ENCODE measurements at regions of chr2 and their contacts with region 1.

Region 1: GRCh38 chr2:24613154-24613814 is 122.2 kb downstream of the NCOA1 start:
- DNase-seq: peak; percentile 18 to 46
- ATAC-seq: peak; percentile 74 to 86
- H3K4me3 ChIP-seq: no peak overlapping the region
- H3K27ac ChIP-seq: peak overlapping the region; percentile 51 to 72 (median 62)
- H3K4me1 ChIP-seq: peaks cover 55 to 59% of the 10 kb centered on the region in 2 donors
- H3K27me3 ChIP-seq: no peaks in the 10 kb centered on the region
- CTCF ChIP-seq: peak in 3 of 5 experiments; percentile 3 to 34 (median 18)
- POLR2A ChIP-seq: no peak

Region 2: GRCh38 chr2:24191848-24192247 is 421.4 kb before region 1 on chr2:
- in situ Hi-C with region 1: no loop called
- intact Hi-C with region 1: no loop called
- DNase-seq: no peak
- ATAC-seq: no peak
- H3K4me3 ChIP-seq: no peak overlapping the region
- H3K27ac ChIP-seq: no peak overlapping the region
- H3K4me1 ChIP-seq: no peaks in the 10 kb centered on the region
- H3K27me3 ChIP-seq: no peaks in the 10 kb centered on the region
- CTCF ChIP-seq: no peak
- POLR2A ChIP-seq: no peak

Region 3: GRCh38 chr2:24635181-24635580 is 21.9 kb after region 1 on chr2:
- in situ Hi-C with region 1: no loop called
- intact Hi-C with region 1: no loop called
- DNase-seq: no peak
- ATAC-seq: no peak
- H3K4me3 ChIP-seq: no peak overlapping the region
- H3K27ac ChIP-seq: peak overlapping the region in 3 of 4 donors; percentile 7 to 26 (median 20)
- H3K4me1 ChIP-seq: peaks cover 2 to 8% of the 10 kb centered on the region in 2 donors
- H3K27me3 ChIP-seq: no peaks in the 10 kb centered on the region
- CTCF ChIP-seq: no peak
- POLR2A ChIP-seq: no peak

Region 4: DNA sequence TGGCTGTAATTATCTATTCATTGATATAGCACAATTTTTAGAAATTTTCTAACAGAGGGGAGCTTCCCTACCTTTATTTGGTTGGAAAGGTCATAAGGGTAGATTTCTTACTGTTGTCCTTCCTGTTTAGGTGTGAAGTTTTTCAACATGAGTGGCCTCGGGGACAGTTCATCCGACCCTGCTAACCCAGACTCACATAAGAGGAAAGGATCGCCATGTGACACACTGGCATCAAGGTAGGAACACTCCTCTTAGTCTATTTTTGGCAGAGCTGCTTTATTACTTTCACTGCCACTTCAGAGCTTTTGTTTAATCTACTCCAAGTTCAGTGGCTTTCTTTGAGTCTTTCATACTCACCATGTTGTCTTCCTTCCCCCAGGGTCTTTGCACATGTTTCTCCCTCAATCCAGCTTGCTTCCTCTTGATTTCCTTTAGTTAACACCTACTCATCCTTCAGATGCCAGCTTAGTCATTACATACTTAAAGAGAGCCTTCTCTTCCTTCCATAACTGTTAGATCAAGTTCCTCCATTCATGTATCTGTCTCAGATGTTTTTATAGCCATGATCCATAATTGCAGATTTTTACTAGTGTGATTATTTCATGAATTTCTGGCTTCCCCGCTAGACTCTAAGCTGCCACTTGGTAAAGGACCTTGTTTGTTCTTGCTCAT is 45.4 kb after region 1 on chr2:
- in situ Hi-C with region 1: no loop called
- intact Hi-C with region 1: loop called (anchors 2 kb)
- DNase-seq: peak; percentile 86 to 89
- ATAC-seq: peak; percentile 94 to 96
- H3K4me3 ChIP-seq: peak overlapping the region in 3 of 4 donors; percentile 7 to 24 (median 13)
- H3K27ac ChIP-seq: peak overlapping the region; percentile 85 to 89 (median 87)
- H3K4me1 ChIP-seq: peaks cover 31 to 60% of the 10 kb centered on the region in 2 donors
- H3K27me3 ChIP-seq: no peaks in the 10 kb centered on the region
- CTCF ChIP-seq: no peak
- POLR2A ChIP-seq: peak in 1 of 2 donors; percentile 9

Region 5: GRCh38 chr2:24739354-24740025 is 126.2 kb after region 1 on chr2:
- in situ Hi-C with region 1: no loop called
- intact Hi-C with region 1: loop called (anchors 5 kb)
- DNase-seq: no peak
- ATAC-seq: peak; percentile 63
- H3K4me3 ChIP-seq: no peak overlapping the region
- H3K27ac ChIP-seq: peak overlapping the region; percentile 30 to 55 (median 38)
- H3K4me1 ChIP-seq: peaks cover 20 to 35% of the 10 kb centered on the region in 2 donors
- H3K27me3 ChIP-seq: no peaks in the 10 kb centered on the region
- CTCF ChIP-seq: no peak
- POLR2A ChIP-seq: no peak

Region 6: DNA sequence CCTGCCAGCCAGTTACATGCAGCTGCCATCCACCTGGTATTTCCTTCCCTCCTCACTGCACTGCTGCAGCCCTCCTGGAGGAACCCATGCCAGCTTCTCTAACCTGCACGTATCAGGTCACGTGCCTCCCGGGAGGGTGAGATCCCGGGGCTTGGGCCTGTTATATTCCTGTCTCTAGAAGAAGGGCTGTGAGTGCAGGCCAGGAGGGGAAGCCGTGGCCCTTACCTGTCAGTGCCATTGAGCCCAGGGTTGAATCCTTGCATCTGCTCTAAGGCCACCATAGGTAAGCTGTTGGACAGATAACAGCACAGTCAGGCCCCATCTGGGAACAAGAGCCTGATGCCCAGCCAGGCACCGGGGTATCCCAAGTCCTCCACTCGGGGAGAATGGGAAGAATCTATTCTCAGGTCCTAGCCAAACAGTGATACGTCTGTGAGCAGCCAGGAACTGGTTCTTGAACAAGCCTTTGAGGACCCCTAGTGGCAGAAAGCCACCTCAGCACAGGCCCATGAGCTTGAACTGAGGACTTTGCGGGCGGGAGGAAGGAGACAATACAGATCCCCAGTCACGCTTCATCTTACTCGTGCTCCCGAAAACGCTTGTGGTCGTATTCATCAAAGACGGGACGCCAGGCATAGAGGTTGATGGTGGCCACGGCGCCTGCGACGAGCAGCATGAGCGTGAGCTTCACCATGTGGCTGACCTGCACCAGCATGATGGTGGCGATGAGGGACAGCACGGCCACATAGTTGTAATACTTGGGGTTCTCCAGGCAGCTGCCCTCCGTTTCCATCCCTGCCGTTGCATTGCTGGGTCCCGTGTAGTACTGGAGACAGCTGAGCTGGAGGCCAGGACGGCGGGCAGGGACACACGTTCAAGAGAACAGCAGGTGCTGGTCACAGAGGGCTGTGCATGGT is 214.3 kb after region 1 on chr2:
- in situ Hi-C with region 1: no loop called
- intact Hi-C with region 1: loop called (anchors 2 kb)
- DNase-seq: peak; percentile 65 to 76
- ATAC-seq: peak; percentile 92 to 97
- H3K4me3 ChIP-seq: peak overlapping the region in 2 of 4 donors; percentile 6 to 30
- H3K27ac ChIP-seq: no peak overlapping the region
- H3K4me1 ChIP-seq: peaks cover 0 to 13% of the 10 kb centered on the region in 2 donors
- H3K27me3 ChIP-seq: no peaks in the 10 kb centered on the region
- CTCF ChIP-seq: peak; percentile 72 to 91 (median 83)
- POLR2A ChIP-seq: no peak